Thyroid gland (tissue), 4 donors: ENCODE measurements at regions of chr16 and their contacts with region 1.

Region 1: GRCh38 chr16:85240982-85241924 is 129.0 kb upstream of the CIBAR2 start:
- DNase-seq: no peak
- H3K4me3 ChIP-seq: no peak overlapping the region
- H3K27ac ChIP-seq: no peak overlapping the region
- H3K4me1 ChIP-seq: peaks cover under 1 to 18% of the 10 kb centered on the region in 2 donors
- H3K27me3 ChIP-seq: no peaks in the 10 kb centered on the region
- CTCF ChIP-seq: no peak
- POLR2A ChIP-seq: no peak

Region 2: GRCh38 chr16:84970447-84971127 is 270.7 kb before region 1 on chr16:
- intact Hi-C with region 1: no loop called
- DNase-seq: peak; percentile 75 to 85
- H3K4me3 ChIP-seq: no peak overlapping the region
- H3K27ac ChIP-seq: no peak overlapping the region
- H3K4me1 ChIP-seq: peaks cover 20 to 27% of the 10 kb centered on the region in 2 donors
- H3K27me3 ChIP-seq: no peaks in the 10 kb centered on the region
- CTCF ChIP-seq: peak; percentile 83 to 94 (median 88)
- POLR2A ChIP-seq: no peak

Region 3: DNA sequence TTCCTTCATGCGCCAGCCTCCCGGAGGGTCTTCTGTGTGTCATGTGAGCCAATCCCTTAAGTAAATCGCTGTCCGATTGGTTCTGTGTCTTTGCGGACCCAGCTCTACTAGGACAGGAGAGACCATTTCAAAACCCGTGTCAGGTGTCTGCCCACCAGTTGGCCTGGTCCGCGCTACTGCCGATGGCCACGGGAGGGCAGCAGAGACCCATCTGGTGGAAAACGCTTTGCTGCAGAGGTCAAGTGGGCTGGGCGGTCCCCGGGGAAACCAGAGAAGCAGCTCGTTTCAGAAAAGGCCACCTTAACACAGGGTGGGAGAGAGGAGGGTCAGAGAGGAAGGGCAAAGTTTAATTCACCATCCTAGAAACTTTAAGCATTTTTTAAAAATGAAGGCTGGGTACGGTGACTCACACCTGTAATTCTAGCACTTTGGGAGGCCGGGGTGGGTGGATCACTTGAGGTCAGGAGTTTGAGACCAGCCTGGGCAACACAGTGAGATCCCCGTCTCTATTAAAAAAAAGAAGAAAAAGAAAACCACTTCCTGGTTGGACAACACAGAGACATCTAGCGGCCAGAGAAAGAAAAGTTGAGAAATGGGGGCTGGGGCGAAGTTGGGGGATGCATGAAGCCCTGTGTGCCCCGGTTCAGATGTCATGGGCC is 126.2 kb before region 1 on chr16:
- intact Hi-C with region 1: loop called (anchors 5 kb)
- DNase-seq: peak; percentile 90 to 91
- H3K4me3 ChIP-seq: no peak overlapping the region
- H3K27ac ChIP-seq: no peak overlapping the region
- H3K4me1 ChIP-seq: peaks cover 0 to 8% of the 10 kb centered on the region in 2 donors
- H3K27me3 ChIP-seq: no peaks in the 10 kb centered on the region
- CTCF ChIP-seq: peak; percentile 87 to 99 (median 98)
- POLR2A ChIP-seq: no peak